ENCODE measurements at regions of chr1 and their contacts with region 1.

Region 1: DNA sequence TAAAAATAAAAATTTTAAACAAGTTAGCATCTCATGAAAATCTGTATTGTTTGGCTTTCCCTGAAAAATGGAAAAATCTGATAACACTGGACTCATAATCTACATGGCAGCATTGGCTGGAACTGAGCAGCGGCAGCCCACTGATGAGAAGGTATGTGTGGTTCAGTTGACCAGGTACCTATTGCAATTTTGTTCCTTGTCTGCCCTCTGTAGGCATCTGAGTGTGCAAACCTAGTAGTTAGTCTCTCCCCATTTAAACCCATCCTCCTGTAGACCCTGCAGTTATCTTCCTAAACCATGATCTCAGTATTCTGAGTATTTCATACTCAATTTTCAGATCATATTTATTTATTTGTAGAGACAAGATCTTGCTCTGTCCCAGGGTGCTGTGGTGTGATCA is 59.4 kb upstream of the SERBP1 start:
- DNase-seq: no peak
- H3K4me3 ChIP-seq: no peak overlapping the region
- H3K4me1 ChIP-seq: no peaks in the 10 kb centered on the region
- H3K27me3 ChIP-seq: no peaks in the 10 kb centered on the region

Region 2: GRCh38 chr1:66996018-66996682 is 493.5 kb before region 1 on chr1:
- in situ Hi-C with region 1: no loop called
- DNase-seq: peak; percentile 59 to 66
- H3K4me3 ChIP-seq: no peak overlapping the region
- H3K4me1 ChIP-seq: no peaks in the 10 kb centered on the region
- H3K27me3 ChIP-seq: no peaks in the 10 kb centered on the region

Region 3: GRCh38 chr1:67227196-67227595 is 262.4 kb before region 1 on chr1:
- in situ Hi-C with region 1: loop called (anchors 10 kb)
- DNase-seq: peak in 1 of 2 experiments; percentile 17
- H3K4me3 ChIP-seq: no peak overlapping the region
- H3K4me1 ChIP-seq: peaks cover 17% of the 10 kb centered on the region
- H3K27me3 ChIP-seq: no peaks in the 10 kb centered on the region

Region 4: GRCh38 chr1:67347688-67348472 is 141.8 kb before region 1 on chr1:
- in situ Hi-C with region 1: loop called (anchors 5 kb)
- DNase-seq: peak; percentile 60 to 65
- H3K4me3 ChIP-seq: no peak overlapping the region
- H3K4me1 ChIP-seq: peaks cover 8% of the 10 kb centered on the region
- H3K27me3 ChIP-seq: no peaks in the 10 kb centered on the region

Measured in HAP-1 (cell line).